GM23248 (cell line): ENCODE measurements at regions of chr7 and their contacts with region 1.

Region 1: GRCh38 chr7:73451780-73452398 is 18.3 kb downstream of the FZD9 start:
- DNase-seq: peak; percentile 73
- H3K4me3 ChIP-seq: no peak overlapping the region
- H3K27ac ChIP-seq: no peak overlapping the region
- H3K4me1 ChIP-seq: no peaks in the 10 kb centered on the region
- H3K27me3 ChIP-seq: no peaks in the 10 kb centered on the region

Region 2: GRCh38 chr7:73308665-73309214 is 143.1 kb before region 1 on chr7 and contains the start of gene NSUN5:
- in situ Hi-C with region 1: no loop called
- DNase-seq: peak; percentile 77
- H3K4me3 ChIP-seq: peak within 1 kb of the TSS; percentile 77
- H3K27ac ChIP-seq: no peak within 1 kb of the TSS
- H3K4me1 ChIP-seq: peaks cover 3% of the 10 kb centered on the region; the same call in 1 of the 2 replicates
- H3K27me3 ChIP-seq: no peaks in the 10 kb centered on the region
- total RNA-seq, gene NSUN5: 15.3 and 25.5 TPM in 2 replicates

Region 3: DNA sequence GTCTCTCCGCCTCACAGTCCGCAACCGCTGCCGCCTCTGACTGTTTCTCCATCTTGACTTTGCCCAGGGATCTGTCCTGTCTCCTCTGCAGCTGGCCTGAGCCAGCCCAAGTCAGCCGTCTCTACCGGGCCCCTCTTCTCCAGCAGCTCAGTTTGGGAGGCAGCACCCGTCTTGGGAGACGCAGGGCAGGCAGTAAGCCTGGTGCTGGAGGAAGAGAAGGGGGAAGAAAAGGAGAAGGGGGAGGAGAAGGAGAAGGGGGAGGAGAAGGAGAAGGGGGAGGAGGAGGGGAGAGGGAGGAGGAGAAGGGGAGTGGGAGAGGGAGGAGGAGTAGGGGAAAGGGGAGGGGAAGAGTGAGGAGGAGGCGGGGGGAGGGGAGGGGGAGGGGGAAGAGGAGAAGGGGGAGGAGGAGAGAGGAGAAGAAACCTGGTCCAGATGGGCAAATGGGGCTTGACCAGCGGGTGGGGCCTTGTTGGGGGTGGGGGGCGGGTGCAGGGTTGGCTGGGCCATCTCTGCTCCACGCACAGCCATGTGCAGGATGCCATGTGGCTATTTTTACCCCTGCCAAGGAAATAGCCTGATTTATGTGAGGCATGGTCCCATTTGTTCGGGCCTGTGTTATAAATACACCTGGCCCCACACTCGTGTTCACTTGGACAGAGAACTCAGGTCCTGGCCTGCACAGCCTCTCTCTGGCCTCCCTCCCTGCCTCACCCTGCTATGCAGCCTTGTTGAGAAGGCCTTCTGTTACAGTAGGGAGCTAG is 54.2 kb before region 1 on chr7:
- in situ Hi-C with region 1: loop called (anchors 10 kb)
- DNase-seq: no peak
- H3K4me3 ChIP-seq: no peak overlapping the region
- H3K27ac ChIP-seq: no peak overlapping the region
- H3K4me1 ChIP-seq: no peaks in the 10 kb centered on the region
- H3K27me3 ChIP-seq: no peaks in the 10 kb centered on the region

Region 4: DNA sequence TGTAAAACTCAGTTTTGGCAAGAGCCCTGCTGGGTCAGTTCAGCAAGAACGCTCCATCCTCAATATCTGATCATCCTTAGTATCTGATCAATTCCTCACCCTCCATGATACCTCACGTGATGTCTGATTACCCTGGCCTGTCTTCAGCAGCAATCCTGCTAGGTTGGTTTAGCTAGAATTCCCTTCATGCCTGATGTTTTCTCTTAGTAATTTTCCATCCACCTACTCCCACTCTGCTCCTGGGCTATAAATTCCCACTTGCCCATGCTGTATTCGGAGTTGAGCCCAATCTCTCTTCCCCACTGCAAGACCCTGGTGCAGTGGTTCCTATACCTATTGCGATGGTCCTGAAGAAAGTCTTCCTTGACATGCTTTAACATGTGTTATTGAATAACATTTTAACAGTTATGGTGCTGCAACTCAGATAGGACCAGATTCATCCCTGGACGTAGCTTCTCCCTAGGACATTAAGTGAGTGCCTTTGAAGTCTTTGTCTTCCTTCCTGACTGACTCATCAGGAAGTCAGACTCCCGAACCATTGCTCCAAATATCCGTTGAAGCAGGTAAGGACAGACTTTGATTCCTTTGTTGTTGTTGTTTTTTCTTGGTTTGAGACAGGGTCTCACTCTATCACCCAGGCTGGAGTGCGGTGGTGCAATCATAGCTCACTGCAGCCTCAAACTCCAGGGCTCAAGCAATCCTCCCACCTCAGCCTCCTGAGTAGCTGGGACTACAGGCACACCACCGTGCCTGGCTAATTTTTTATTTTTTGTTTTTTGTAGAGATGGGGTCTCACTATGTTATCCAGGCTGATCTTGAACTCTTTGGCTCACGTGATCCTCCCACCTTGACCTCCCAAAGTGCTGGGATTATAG is 347.6 kb after region 1 on chr7:
- in situ Hi-C with region 1: no loop called
- DNase-seq: no peak
- H3K4me3 ChIP-seq: no peak overlapping the region
- H3K27ac ChIP-seq: no peak overlapping the region
- H3K4me1 ChIP-seq: no peaks in the 10 kb centered on the region
- H3K27me3 ChIP-seq: no peaks in the 10 kb centered on the region

Region 5: GRCh38 chr7:74525880-74526279 is 1074.0 kb after region 1 on chr7:
- in situ Hi-C with region 1: no loop called
- DNase-seq: no peak
- H3K4me3 ChIP-seq: no peak overlapping the region
- H3K27ac ChIP-seq: no peak overlapping the region
- H3K4me1 ChIP-seq: no peaks in the 10 kb centered on the region
- H3K27me3 ChIP-seq: no peaks in the 10 kb centered on the region